ENCODE measurements at regions of chr14 and their contacts with region 1.

Region 1: GRCh38 chr14:57909626-57910025 is 43.7 kb upstream of the SLC35F4 start:
- DNase-seq: no peak
- H3K4me3 Mint-ChIP-seq: no peak overlapping the region
- H3K27ac Mint-ChIP-seq: no peak overlapping the region
- H3K4me1 Mint-ChIP-seq: no peaks in the 10 kb centered on the region
- H3K27me3 Mint-ChIP-seq: peaks cover 36% of the 10 kb centered on the region
- CTCF ChIP-seq: no peak

Region 2: GRCh38 chr14:57982804-57983634 is 73.4 kb after region 1 on chr14:
- CTCF ChIA-PET with region 1: no interaction called
- POLR2A ChIA-PET with region 1: no interaction called
- intact Hi-C with region 1: loop called (anchors 5 kb)
- DNase-seq: no peak
- H3K4me3 Mint-ChIP-seq: no peak overlapping the region
- H3K27ac Mint-ChIP-seq: no peak overlapping the region
- H3K4me1 Mint-ChIP-seq: no peaks in the 10 kb centered on the region
- H3K27me3 Mint-ChIP-seq: peaks cover 20% of the 10 kb centered on the region
- CTCF ChIP-seq: no peak